ENCODE measurements at regions of chr11 and their contacts with region 1.

Region 1: DNA sequence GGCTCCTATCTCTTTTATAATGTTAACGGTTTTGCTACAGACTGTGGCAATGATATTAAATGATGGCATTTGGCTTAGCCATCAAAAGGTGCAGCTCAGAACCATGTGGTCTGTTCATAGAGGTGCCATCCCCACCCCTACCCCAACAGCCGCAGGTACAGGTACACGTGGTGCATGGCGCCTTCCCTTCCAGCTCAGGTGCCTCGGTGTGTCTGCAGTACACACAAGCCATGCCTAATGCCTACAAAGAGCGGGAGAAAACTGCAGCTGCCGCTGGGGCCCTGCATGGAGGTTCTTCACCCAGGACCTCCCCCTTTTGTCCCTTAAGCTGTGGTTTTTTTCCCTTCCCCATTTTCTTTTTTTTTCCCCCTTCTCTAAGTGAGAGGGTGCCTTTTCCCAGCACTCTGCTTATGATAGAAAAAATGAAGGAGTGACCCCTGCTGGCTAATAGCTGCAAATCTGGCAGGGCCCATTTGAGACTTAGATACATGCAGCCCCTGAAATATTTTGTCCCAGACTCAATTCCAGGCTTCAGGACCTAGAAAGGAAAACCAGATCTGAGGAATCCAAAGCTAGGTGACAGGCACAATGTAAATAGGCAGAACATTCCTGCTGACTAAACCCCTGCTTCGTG is 6.5 kb downstream of the OR52M1 start:
- DNase-seq: no peak
- ATAC-seq: peak; percentile 93
- H3K4me3 Mint-ChIP-seq: no peak overlapping the region
- H3K27ac Mint-ChIP-seq: no peak overlapping the region
- H3K4me1 Mint-ChIP-seq: no peaks in the 10 kb centered on the region
- H3K27me3 Mint-ChIP-seq: peaks cover 10% of the 10 kb centered on the region
- CTCF ChIP-seq: no peak

Region 2: DNA sequence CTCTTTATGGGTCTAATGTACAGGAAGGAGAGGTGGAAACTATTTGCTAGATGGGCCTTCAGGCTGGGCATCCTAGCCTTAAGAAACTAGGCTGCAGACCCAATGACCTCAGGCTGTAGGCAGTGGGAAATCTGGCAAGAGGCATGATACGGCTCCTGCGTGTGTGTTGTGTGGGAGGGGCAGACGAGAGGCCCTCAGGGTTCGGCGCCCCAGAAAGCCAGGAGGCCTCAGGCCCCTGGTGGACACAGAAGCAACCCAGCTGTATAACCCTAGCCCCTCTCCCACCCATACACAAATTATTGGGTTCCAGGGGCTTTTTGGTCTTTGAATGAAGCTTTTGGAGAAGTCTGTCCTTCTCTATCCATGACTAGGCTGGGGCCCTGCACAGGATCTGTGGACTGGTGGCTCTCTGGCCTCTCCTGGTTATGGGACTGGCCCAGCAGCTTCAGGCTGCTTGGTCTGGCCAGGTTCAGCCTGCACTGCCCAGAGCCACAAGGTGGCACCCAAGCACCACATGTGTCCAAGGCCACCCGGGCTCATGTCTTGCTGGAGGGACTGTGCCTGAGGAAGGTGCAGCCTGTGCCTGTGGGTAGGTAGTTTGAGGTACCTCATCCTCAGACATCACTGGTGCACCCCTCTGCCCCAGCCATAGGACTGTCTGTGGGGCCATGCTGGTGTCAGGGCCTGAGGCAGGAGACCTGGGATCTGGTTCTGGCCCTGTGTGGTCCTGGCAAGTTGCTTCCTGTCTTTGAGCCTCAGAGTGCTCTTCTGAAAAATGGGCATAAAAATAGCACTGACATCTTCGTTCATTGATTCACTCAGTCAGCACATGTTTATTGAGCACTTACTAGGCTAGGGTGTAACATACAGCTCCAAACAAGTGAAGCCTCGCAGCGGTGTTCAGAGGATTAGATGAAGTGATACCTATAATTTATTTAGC is 369.4 kb before region 1 on chr11:
- CTCF ChIA-PET with region 1: interaction called, 24 read pairs
- POLR2A ChIA-PET with region 1: no interaction called
- DNase-seq: peak; percentile 71
- ATAC-seq: peak; percentile 89
- H3K4me3 Mint-ChIP-seq: no peak overlapping the region
- H3K27ac Mint-ChIP-seq: no peak overlapping the region
- H3K4me1 Mint-ChIP-seq: no peaks in the 10 kb centered on the region
- H3K27me3 Mint-ChIP-seq: no peaks in the 10 kb centered on the region; the same call in 1 of the 2 replicates
- CTCF ChIP-seq: peak; percentile 37; the same call in 1 of the 2 replicates

Measured in WTC11 (cell line).